ENCODE measurements at regions of chr10 and their contacts with region 1.

Region 1: DNA sequence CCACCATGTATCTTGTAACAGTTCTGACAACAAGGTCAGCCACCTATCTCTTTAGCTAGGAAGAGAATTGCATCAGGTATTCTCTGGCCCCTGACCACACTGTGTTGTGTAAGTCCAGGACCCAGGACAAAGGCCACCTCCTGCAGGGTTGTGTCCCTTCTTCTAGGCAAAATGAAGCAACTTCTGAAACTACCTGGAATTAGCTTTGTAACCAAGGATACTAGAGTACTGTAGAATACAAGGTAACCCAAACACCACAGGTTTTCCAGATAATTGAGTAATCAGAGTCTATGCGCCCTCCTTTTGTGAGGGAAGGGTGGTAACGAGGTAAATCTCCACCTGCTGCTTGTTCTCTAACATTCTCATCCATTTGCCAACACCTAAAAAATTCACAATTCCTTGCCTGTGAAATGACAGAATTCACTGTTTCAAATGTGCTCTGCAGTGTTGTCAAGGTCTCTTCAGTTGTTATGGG is 51.7 kb downstream of the SGMS1 start:
- DNase-seq: peak; percentile 92
- ATAC-seq: peak; percentile 99
- H3K4me3 ChIP-seq: no peak overlapping the region; a peak in 1 of 6 replicates
- H3K27ac ChIP-seq: peak overlapping the region; percentile 92
- H3K4me1 ChIP-seq: peaks cover 47% of the 10 kb centered on the region
- H3K27me3 ChIP-seq: no peaks in the 10 kb centered on the region
- CTCF ChIP-seq: no peak
- EP300 ChIP-seq: peak; percentile 93 to 97
- POLR2A ChIP-seq: no peak
- RAD21 ChIP-seq: no peak

Region 2: DNA sequence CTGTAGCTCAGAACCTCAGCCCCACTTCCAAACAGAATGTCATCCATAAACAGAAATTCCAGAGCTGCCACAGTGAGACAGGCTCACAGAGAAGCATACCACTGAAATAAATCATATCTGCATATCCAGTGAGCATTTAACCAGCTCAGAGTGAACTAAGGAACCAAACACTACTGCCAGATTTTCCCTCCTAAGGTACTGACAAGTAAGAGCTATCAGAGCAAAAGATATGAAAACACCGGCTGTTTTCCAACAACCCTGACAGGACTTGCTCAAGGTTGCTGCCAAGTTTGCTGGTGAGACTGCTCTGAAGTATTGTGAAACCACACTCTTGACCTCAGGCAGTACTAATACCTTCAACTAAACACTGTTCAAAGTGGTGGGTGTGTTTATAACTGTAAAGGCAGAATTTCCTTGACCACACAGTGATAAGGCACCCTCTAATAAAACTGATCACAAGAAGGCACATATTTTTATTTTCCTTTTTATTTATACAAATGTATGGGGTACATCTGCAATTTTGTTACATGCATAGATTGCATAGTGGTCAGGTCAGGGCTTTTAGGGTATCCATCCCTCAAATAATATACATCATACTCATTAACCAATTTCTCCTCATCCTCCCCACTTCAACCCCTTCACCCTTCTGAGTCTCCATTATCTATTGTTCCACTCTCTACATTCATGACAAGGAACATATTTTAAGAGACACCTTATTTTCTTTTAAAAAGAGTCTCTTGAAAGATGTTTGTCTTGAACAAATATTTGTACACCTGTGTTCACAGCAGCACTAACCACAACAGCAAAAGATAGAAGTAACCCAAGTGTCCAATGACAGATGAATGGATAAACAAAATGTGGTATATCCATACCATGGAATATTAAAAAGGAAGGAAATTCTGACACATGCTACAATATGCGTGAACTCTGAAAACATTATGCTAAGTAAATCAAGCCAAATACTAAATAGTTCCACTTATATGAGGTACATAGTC is 33.5 kb after region 1 on chr10:
- CTCF ChIA-PET with region 1: no interaction called
- POLR2A ChIA-PET with region 1: interaction called, 11 read pairs
- in situ Hi-C with region 1: no loop called
- intact Hi-C with region 1: loop called (anchors 1 kb)
- DNase-seq: peak; percentile 75
- ATAC-seq: peak; percentile 91
- H3K4me3 ChIP-seq: no peak overlapping the region
- H3K27ac ChIP-seq: peak overlapping the region; percentile 62
- H3K4me1 ChIP-seq: peaks cover 66% of the 10 kb centered on the region
- H3K27me3 ChIP-seq: no peaks in the 10 kb centered on the region
- CTCF ChIP-seq: no peak
- EP300 ChIP-seq: peak in 1 of 2 experiments; percentile 81; a peak in 2 of 4 replicates
- POLR2A ChIP-seq: no peak
- RAD21 ChIP-seq: no peak

Region 3: GRCh38 chr10:50615658-50616057 is 43.6 kb after region 1 on chr10:
- CTCF ChIA-PET with region 1: no interaction called
- POLR2A ChIA-PET with region 1: no interaction called
- in situ Hi-C with region 1: no loop called
- intact Hi-C with region 1: no loop called
- DNase-seq: no peak
- ATAC-seq: no peak
- H3K4me3 ChIP-seq: no peak overlapping the region
- H3K27ac ChIP-seq: no peak overlapping the region
- H3K4me1 ChIP-seq: peaks cover 35% of the 10 kb centered on the region
- H3K27me3 ChIP-seq: no peaks in the 10 kb centered on the region
- CTCF ChIP-seq: no peak
- EP300 ChIP-seq: no peak
- POLR2A ChIP-seq: no peak
- RAD21 ChIP-seq: no peak

Region 4: DNA sequence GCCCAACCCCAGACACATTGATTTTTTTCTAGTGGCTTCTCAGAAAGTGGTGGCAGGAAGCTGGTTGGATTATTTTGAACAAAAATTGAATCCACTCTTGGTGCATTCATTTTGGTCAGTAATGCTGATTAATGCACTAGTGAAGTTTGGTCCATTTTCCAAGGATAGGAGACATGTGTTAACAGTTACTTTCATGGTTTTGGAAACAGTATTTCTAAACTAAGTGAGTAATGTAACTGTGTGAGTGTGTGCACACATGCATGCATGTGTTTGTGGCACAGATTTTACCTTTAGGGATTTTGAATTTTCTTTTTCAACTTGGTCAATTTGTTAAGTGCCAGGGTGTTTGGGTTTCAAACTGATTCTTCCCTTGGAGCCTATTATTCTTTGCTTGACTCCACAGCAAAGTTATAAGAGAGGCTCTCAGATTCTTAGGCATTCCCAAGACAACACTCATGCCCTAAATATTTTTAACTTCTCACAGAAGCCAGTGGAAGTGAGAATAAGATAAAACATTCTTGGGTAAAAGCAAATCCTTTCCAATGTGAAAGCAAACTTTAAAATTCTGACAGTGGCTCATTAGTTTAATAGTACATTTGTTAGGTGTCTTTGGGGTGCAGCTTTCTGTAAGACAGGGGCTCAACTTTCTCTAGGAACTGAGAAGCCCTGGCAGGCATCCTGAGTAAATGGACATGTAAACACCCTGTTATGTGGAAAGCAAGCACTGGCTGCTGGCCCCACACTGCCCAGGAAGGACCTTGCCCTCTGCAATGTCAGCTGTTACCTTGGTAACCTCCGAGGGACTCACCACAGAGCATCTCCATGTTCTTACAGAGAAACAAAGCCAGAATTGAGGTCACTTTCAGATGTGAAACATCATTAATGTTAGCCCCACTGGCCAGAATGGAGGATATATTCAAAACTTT is 236.1 kb after region 1 on chr10:
- CTCF ChIA-PET with region 1: no interaction called
- POLR2A ChIA-PET with region 1: no interaction called
- in situ Hi-C with region 1: no loop called
- intact Hi-C with region 1: no loop called
- DNase-seq: peak; percentile 88
- ATAC-seq: peak; percentile 100
- H3K4me3 ChIP-seq: no peak overlapping the region
- H3K27ac ChIP-seq: peak overlapping the region; percentile 71
- H3K4me1 ChIP-seq: peaks cover 24% of the 10 kb centered on the region
- H3K27me3 ChIP-seq: no peaks in the 10 kb centered on the region
- CTCF ChIP-seq: no peak
- EP300 ChIP-seq: peak; percentile 56 to 64; a peak in 3 of 4 replicates
- POLR2A ChIP-seq: no peak
- RAD21 ChIP-seq: no peak